Dorsolateral prefrontal cortex (tissue), 120 donors: ENCODE measurements at regions of chr11 and their contacts with region 1.

Region 1: GRCh38 chr11:94493281-94494125 is at the starts of genes ANKRD49 and MRE11:
- DNase-seq: peak; percentile 92 to 99 (median 98)
- H3K4me3 ChIP-seq: peak within 1 kb of the TSS; percentile 51 to 99 (median 91)
- H3K27ac ChIP-seq: peak within 1 kb of the TSS in 55 of 59 donors; percentile 3 to 87 (median 69)
- H3K27me3 ChIP-seq: no peaks in the 10 kb centered on the region
- CTCF ChIP-seq: peak in 22 of 56 donors; percentile 5 to 43 (median 22)
- total RNA-seq, gene ANKRD49: 7.4 to 21.0 (median 13.1) TPM
- total RNA-seq, gene MRE11: 11.0 to 29.5 (median 19.0) TPM

Region 2: GRCh38 chr11:93741094-93741881 is 752.2 kb before region 1 on chr11 and contains the starts of genes C11orf54 and TAF1D:
- intact Hi-C with region 1: loop called (anchors 10 kb)
- DNase-seq: peak; percentile 89 to 97 (median 96)
- H3K4me3 ChIP-seq: peak within 1 kb of the TSS; percentile 42 to 96 (median 84)
- H3K27ac ChIP-seq: peak within 1 kb of the TSS; percentile 52 to 96 (median 89)
- H3K27me3 ChIP-seq: no peaks in the 10 kb centered on the region
- CTCF ChIP-seq: peak in 38 of 56 donors; percentile 2 to 67 (median 35)
- total RNA-seq, gene C11orf54: 23.5 to 54.6 (median 37.3) TPM
- total RNA-seq, gene TAF1D: 75.7 to 158 (median 117) TPM

Region 3: DNA sequence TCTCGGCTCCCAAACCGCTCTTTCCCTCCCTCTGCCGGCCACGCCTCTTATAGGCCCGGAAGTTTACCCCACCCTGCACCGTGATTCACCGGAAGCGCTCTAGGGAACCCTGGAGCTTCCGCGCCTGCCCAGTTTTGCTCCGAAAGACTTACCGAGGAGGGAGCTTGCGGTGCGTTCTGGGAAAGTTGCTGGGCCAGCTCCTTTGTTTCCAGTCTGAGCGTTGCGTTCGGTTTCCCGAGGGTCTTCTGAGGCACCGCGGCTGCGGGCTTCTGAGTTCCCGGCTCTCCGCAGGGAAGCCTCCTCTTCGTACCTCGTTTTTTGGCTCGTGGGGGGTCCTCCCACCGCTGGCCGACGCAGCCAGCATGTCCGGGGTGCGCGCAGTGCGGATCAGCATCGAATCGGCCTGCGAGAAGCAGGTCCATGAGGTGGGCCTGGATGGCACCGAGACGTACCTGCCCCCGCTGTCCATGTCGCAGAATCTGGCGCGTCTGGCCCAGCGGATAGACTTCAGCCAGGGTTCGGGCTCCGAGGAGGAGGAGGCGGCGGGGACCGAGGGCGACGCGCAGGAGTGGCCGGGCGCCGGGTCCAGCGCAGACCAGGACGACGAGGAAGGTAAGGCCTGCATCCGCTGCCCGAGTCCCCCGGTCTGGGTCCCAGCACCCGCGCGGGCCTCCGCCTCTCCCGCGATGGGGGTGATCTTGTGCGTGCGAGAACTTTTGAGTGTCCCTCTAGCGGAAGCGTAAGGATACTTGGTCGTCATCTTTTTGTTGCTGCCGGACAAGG is 709.2 kb before region 1 on chr11 and contains the start of gene MED17:
- intact Hi-C with region 1: loop called in 1 of 2 experiments (anchors 10 kb)
- DNase-seq: peak; percentile 84 to 96 (median 94)
- H3K4me3 ChIP-seq: peak within 1 kb of the TSS; percentile 72 to 100 (median 93)
- H3K27ac ChIP-seq: peak within 1 kb of the TSS; percentile 20 to 97 (median 90)
- H3K27me3 ChIP-seq: no peaks in the 10 kb centered on the region
- CTCF ChIP-seq: peak in 54 of 56 donors; percentile 12 to 77 (median 60)
- total RNA-seq, gene MED17: 23.9 to 45.0 (median 35.8) TPM

Region 4: GRCh38 chr11:94128746-94129511 is 364.6 kb before region 1 on chr11 and contains the start of gene PANX1:
- intact Hi-C with region 1: loop called in 1 of 2 experiments (anchors 10 kb)
- DNase-seq: peak; percentile 35 to 77 (median 58)
- H3K4me3 ChIP-seq: peak within 1 kb of the TSS; percentile 63 to 94 (median 86)
- H3K27ac ChIP-seq: peak within 1 kb of the TSS in 58 of 59 donors; percentile 45 to 95 (median 81)
- H3K27me3 ChIP-seq: no peaks in the 10 kb centered on the region
- CTCF ChIP-seq: peak in 20 of 56 donors; percentile 6 to 40 (median 20)
- total RNA-seq, gene PANX1: 9.8 to 39.2 (median 22.1) TPM

Region 5: GRCh38 chr11:94447149-94447548 is 46.4 kb before region 1 on chr11:
- intact Hi-C with region 1: no loop called
- DNase-seq: no peak
- H3K4me3 ChIP-seq: no peak overlapping the region
- H3K27ac ChIP-seq: no peak overlapping the region
- H3K27me3 ChIP-seq: no peaks in the 10 kb centered on the region
- CTCF ChIP-seq: no peak